K562 (cell line): ENCODE measurements at regions of chr17 and their contacts with region 1.

Region 1: GRCh38 chr17:38729886-38730525 is at the start of gene CISD3:
- DNase-seq: peak; percentile 93 to 95 (median 94)
- ATAC-seq: peak; percentile 90
- H3K4me3 ChIP-seq: peak within 1 kb of the TSS; percentile 55
- H3K27ac ChIP-seq: peak within 1 kb of the TSS; percentile 72
- H3K4me1 ChIP-seq: peaks cover 46 to 76% of the 10 kb centered on the region in 2 experiments
- H3K27me3 ChIP-seq: no peaks in the 10 kb centered on the region
- CTCF ChIP-seq: peak in 2 of 3 experiments; percentile 67 to 80
- EP300 ChIP-seq: no peak
- POLR2A ChIP-seq: no peak; the same call in 1 of the 2 replicates
- RAD21 ChIP-seq: peak in 1 of 2 experiments; percentile 61; a peak in 2 of 4 replicates
- polyA plus RNA-seq, gene CISD3: 5.0 to 10.7 TPM

Region 2: GRCh38 chr17:38674749-38675615 is 55.0 kb before region 1 on chr17 and contains the start of gene EPOP:
- CTCF ChIA-PET with region 1: interaction called, 25 read pairs
- POLR2A ChIA-PET with region 1: no interaction called
- in situ Hi-C with region 1: loop called (anchors 5 kb)
- intact Hi-C with region 1: loop called (anchors 1 kb)
- DNase-seq: peak; percentile 94 to 98 (median 98)
- ATAC-seq: peak; percentile 92
- H3K4me3 ChIP-seq: peak within 1 kb of the TSS; percentile 56
- H3K27ac ChIP-seq: peak within 1 kb of the TSS; percentile 74
- H3K4me1 ChIP-seq: peaks cover 20 to 30% of the 10 kb centered on the region in 2 experiments
- H3K27me3 ChIP-seq: peaks cover 0 to 6% of the 10 kb centered on the region in 2 experiments; a peak in 2 of 5 replicates
- CTCF ChIP-seq: no peak
- EP300 ChIP-seq: no peak
- POLR2A ChIP-seq: peak; percentile 65
- RAD21 ChIP-seq: no peak
- polyA plus RNA-seq, gene EPOP: 0.41 to 0.62 TPM

Region 3: DNA sequence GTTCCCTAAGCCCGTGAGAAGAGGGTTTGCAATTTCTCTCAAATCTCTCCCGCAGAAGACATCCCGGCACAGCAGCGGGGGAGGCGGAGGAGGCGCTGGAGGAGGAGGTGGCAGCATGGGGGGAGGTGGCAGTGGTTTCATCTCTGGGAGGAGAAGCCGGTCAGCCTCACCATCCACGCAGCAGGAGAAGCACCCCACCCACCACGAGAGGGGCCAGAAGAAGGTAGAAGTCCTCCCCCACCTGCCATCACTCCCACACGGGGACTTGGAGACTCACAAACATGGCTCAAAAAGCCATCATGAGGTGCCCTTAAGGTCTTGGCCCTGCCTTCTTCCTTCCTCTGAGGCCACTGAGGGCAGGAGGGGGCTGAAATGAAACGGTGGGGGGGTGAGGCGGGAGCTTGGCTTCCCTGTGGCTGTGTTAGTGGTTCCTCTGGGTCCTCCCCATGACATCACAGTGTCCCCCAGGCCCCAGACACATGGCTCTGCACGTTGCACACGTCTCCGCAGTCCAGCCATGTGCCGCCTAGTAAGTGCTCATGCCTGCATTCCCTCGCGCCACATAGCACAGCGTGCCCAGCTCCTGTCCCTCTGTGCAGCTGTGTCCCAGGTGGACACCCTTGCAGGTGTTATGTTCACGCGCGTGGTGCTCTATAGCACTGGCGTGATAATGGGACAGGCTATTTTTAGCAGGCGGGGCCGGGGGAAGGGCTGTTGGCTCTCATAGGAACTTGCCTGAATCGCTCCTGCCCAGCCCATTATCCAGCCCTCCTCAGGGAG is 18.0 kb before region 1 on chr17:
- CTCF ChIA-PET with region 1: no interaction called
- POLR2A ChIA-PET with region 1: interaction called, 15 read pairs
- in situ Hi-C with region 1: no loop called
- intact Hi-C with region 1: no loop called
- DNase-seq: peak in 1 of 4 experiments; percentile 38
- ATAC-seq: no peak
- H3K4me3 ChIP-seq: no peak overlapping the region
- H3K27ac ChIP-seq: no peak overlapping the region
- H3K4me1 ChIP-seq: peaks cover 30 to 52% of the 10 kb centered on the region in 2 experiments
- H3K27me3 ChIP-seq: no peaks in the 10 kb centered on the region
- CTCF ChIP-seq: no peak
- EP300 ChIP-seq: no peak
- POLR2A ChIP-seq: no peak
- RAD21 ChIP-seq: no peak

Region 4: DNA sequence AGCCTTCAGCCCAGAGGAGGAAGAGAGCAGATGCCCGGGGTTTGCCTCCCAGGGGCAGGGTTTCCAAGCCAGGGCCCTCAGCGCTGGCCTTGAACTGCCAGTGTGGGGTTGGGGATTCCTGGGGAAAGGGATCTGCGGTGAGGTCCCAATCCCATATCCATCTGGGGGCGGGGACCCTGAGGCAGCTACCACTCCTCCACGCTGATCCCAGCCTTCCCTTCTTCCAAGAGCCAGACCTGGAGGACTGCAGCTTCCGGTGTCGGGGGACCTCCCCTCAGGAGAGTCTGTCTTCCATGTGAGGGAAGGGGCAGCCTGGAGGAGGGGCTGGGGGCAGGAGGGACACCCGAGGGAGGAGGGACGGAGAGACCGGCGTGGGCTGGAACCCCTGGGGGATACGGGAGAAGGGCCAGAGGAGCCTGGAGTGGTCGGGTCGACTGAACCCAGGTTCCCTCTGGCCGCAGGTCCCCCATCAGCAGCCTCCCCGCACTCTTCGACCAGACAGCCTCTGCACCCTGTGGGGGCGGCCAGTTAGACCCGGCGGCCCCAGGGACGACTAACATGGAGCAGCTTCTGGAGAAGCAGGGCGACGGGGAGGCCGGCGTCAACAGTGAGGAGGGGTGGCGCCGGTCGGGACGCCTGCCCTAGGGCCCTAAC is 10.6 kb before region 1 on chr17:
- CTCF ChIA-PET with region 1: no interaction called
- POLR2A ChIA-PET with region 1: interaction called, 13 read pairs
- in situ Hi-C with region 1: no loop called
- intact Hi-C with region 1: no loop called
- DNase-seq: no peak
- ATAC-seq: peak; percentile 3
- H3K4me3 ChIP-seq: no peak overlapping the region; the same call in 1 of the 2 replicates
- H3K27ac ChIP-seq: peak overlapping the region; percentile 56
- H3K4me1 ChIP-seq: peaks cover 20 to 41% of the 10 kb centered on the region in 2 experiments
- H3K27me3 ChIP-seq: no peaks in the 10 kb centered on the region
- CTCF ChIP-seq: no peak
- EP300 ChIP-seq: no peak
- POLR2A ChIP-seq: no peak
- RAD21 ChIP-seq: no peak